Calu3 (cell line): ENCODE measurements at regions of chr6 and their contacts with region 1.

Region 1: GRCh38 chr6:99822741-99823512 is 171.1 kb downstream of the MCHR2 start:
- DNase-seq: peak; percentile 52
- H3K4me3 Mint-ChIP-seq: peak overlapping the region; percentile 66
- H3K27ac Mint-ChIP-seq: no peak overlapping the region
- H3K4me1 Mint-ChIP-seq: peaks cover 16% of the 10 kb centered on the region
- H3K27me3 Mint-ChIP-seq: peaks cover 31% of the 10 kb centered on the region
- CTCF ChIP-seq: peak; percentile 44

Region 2: DNA sequence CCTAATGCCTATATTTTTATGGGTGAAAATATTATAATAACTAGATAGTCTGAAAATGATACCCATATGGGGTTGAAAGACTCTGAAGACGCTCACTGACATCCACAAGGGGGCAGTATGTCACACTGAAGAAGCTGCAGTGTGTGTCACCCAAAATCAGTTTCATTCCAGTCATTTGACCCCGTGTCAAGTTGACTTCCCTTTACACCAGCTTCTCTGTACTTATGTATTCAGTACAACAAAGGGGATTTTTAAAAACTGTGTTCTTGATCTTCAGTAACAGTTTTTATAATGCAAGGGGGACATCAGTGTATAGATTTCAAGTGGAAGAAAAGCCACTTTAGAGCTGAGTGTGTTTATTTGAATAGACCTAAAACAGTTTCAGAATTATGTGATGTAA is 492.8 kb before region 1 on chr6:
- CTCF ChIA-PET with region 1: interaction called, 3 read pairs
- intact Hi-C with region 1: loop called (anchors 2 kb)
- DNase-seq: peak; percentile 52
- H3K4me3 Mint-ChIP-seq: no peak overlapping the region
- H3K27ac Mint-ChIP-seq: no peak overlapping the region
- H3K4me1 Mint-ChIP-seq: no peaks in the 10 kb centered on the region
- H3K27me3 Mint-ChIP-seq: no peaks in the 10 kb centered on the region
- CTCF ChIP-seq: peak; percentile 66

Region 3: GRCh38 chr6:99467509-99468106 is 355.3 kb before region 1 on chr6:
- CTCF ChIA-PET with region 1: no interaction called
- intact Hi-C with region 1: loop called (anchors 1 kb)
- DNase-seq: no peak
- H3K4me3 Mint-ChIP-seq: no peak overlapping the region
- H3K27ac Mint-ChIP-seq: no peak overlapping the region
- H3K4me1 Mint-ChIP-seq: no peaks in the 10 kb centered on the region
- H3K27me3 Mint-ChIP-seq: no peaks in the 10 kb centered on the region
- CTCF ChIP-seq: peak; percentile 61

Region 4: GRCh38 chr6:99588618-99589289 is 234.2 kb before region 1 on chr6:
- CTCF ChIA-PET with region 1: interaction called, 7 read pairs
- intact Hi-C with region 1: loop called (anchors 5 kb)
- DNase-seq: peak; percentile 82
- H3K4me3 Mint-ChIP-seq: peak overlapping the region; percentile 95
- H3K27ac Mint-ChIP-seq: no peak overlapping the region
- H3K4me1 Mint-ChIP-seq: peaks cover 10% of the 10 kb centered on the region
- H3K27me3 Mint-ChIP-seq: peaks cover 49% of the 10 kb centered on the region
- CTCF ChIP-seq: no peak

Region 5: GRCh38 chr6:99746261-99746895 is 76.5 kb before region 1 on chr6:
- CTCF ChIA-PET with region 1: no interaction called
- intact Hi-C with region 1: loop called (anchors 5 kb)
- DNase-seq: peak; percentile 70
- H3K4me3 Mint-ChIP-seq: no peak overlapping the region
- H3K27ac Mint-ChIP-seq: no peak overlapping the region
- H3K4me1 Mint-ChIP-seq: no peaks in the 10 kb centered on the region
- H3K27me3 Mint-ChIP-seq: peaks cover 9% of the 10 kb centered on the region
- CTCF ChIP-seq: peak; percentile 72

Region 6: DNA sequence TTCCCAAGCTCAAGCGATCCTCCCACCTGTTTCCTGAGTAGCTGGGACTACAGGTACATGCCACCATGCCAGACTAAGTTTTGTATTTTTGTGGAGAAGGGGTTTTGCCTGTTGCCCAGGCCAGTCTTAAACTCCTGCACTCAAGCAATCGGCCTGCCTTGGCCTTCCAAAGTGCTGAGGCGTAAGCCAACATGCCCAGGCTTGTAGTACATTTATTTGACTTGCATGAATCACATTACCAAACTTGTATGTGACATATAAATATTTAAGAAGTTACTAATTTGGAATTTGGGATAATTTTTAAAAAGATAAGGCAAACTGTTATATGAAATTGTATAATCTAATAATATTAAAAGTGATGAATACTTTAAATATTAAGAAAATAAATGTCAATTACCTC is 13.5 kb after region 1 on chr6:
- CTCF ChIA-PET with region 1: no interaction called
- intact Hi-C with region 1: no loop called
- DNase-seq: no peak
- H3K4me3 Mint-ChIP-seq: no peak overlapping the region
- H3K27ac Mint-ChIP-seq: no peak overlapping the region
- H3K4me1 Mint-ChIP-seq: no peaks in the 10 kb centered on the region
- H3K27me3 Mint-ChIP-seq: peaks cover 14% of the 10 kb centered on the region
- CTCF ChIP-seq: no peak